ENCODE measurements at regions of chr4 and their contacts with region 1.

Region 1: GRCh38 chr4:132493476-132493875 is 655.6 kb upstream of the PCDH10 start:
- DNase-seq: no peak
- ATAC-seq: no peak
- H3K4me3 ChIP-seq: no peak overlapping the region
- H3K27ac ChIP-seq: no peak overlapping the region
- H3K4me1 ChIP-seq: no peaks in the 10 kb centered on the region
- H3K27me3 ChIP-seq: no peaks in the 10 kb centered on the region
- CTCF ChIP-seq: no peak
- POLR2A ChIP-seq: no peak
- RAD21 ChIP-seq: no peak

Region 2: GRCh38 chr4:132504438-132504837 is 11.0 kb after region 1 on chr4:
- CTCF ChIA-PET with region 1: no interaction called
- POLR2A ChIA-PET with region 1: no interaction called
- dilution Hi-C with region 1: no loop called
- in situ Hi-C with region 1: no loop called
- intact Hi-C with region 1: no loop called
- DNase-seq: no peak
- ATAC-seq: no peak
- H3K4me3 ChIP-seq: no peak overlapping the region
- H3K27ac ChIP-seq: no peak overlapping the region
- H3K4me1 ChIP-seq: no peaks in the 10 kb centered on the region
- H3K27me3 ChIP-seq: no peaks in the 10 kb centered on the region
- CTCF ChIP-seq: no peak
- POLR2A ChIP-seq: no peak
- RAD21 ChIP-seq: no peak

Region 3: DNA sequence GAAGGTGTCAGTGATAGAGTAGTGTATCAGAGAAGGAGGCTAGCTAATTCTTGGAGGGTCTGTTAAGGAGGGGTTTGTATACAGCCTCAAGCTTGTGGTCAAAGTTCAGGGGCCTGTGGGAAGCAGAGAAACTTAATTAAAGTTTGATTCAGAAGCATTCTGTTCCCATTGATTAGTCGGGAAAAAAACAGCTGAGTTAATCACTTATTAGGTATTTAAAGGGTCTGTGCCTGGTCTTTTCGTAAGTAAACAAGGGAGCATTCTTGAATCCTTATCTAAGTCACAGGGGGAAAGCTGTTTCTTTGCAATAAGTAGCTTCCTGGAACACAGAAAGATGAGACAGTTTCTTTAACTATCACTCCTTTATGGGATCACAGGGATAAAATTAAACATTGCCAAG is 1147.7 kb after region 1 on chr4:
- CTCF ChIA-PET with region 1: no interaction called
- POLR2A ChIA-PET with region 1: no interaction called
- dilution Hi-C with region 1: no loop called
- in situ Hi-C with region 1: no loop called
- intact Hi-C with region 1: loop called (anchors 5 kb)
- DNase-seq: no peak
- ATAC-seq: no peak
- H3K4me3 ChIP-seq: no peak overlapping the region
- H3K27ac ChIP-seq: no peak overlapping the region
- H3K4me1 ChIP-seq: no peaks in the 10 kb centered on the region
- H3K27me3 ChIP-seq: no peaks in the 10 kb centered on the region
- CTCF ChIP-seq: no peak
- POLR2A ChIP-seq: no peak
- RAD21 ChIP-seq: no peak